H1 (cell line): ENCODE measurements at regions of chr11 and their contacts with region 1.

Region 1: GRCh38 chr11:46295312-46296058 is 18.0 kb downstream of the CREB3L1 start:
- DNase-seq: peak; percentile 64 to 92
- H3K4me3 ChIP-seq: peak overlapping the region; percentile 42 to 67 (median 54)
- H3K27ac ChIP-seq: peak overlapping the region; percentile 79
- H3K4me1 ChIP-seq: peaks cover 22 to 49% (median 35%) of the 10 kb centered on the region in 4 experiments
- H3K27me3 ChIP-seq: no peaks in the 10 kb centered on the region
- CTCF ChIP-seq: no peak
- EP300 ChIP-seq: no peak
- POLR2A ChIP-seq: peak; percentile 71 to 89
- RAD21 ChIP-seq: no peak; a peak in 1 of 4 replicates

Region 2: GRCh38 chr11:46039990-46040389 is 255.5 kb before region 1 on chr11:
- CTCF ChIA-PET with region 1: no interaction called
- POLR2A ChIA-PET with region 1: no interaction called
- DNase-seq: no peak
- H3K4me3 ChIP-seq: no peak overlapping the region
- H3K27ac ChIP-seq: no peak overlapping the region
- H3K4me1 ChIP-seq: no peaks in the 10 kb centered on the region
- H3K27me3 ChIP-seq: no peaks in the 10 kb centered on the region
- CTCF ChIP-seq: no peak
- EP300 ChIP-seq: no peak
- POLR2A ChIP-seq: no peak
- RAD21 ChIP-seq: no peak

Region 3: DNA sequence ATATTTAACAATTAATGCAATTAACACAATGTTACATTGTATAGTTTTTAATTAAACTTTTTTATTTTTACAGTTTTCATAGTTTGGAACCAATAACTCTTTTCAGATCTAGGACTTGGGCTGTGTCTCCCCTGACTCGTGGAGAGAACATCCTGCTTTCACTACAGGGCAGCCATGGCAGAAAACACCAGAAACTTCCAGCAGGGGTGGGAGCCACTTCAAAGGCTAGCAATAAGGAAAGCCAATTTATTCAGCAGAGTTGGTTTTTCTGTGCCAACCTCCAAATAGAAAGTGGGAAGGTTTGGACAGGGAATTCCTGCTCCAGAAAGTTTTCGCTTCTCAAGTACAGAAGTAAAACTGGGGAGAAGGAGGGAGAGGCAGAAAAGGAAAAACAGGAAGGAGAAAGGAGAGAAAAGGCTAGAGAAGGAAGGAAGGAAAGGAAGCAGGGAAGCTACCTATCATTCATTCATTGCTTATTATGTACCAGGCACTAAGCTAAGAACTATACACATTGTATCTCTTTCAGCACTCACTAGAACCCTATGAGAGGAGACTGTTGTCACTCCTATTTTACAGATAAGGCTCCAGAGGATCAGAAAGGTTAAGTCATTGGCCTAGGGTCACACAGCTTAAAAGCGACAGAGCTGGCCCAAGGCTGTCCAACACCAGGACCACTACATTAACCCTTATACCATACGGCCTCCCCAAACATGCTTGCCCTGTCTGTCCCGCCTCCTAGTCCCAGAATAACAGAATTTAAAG is 72.8 kb before region 1 on chr11:
- CTCF ChIA-PET with region 1: no interaction called
- POLR2A ChIA-PET with region 1: no interaction called
- DNase-seq: no peak
- H3K4me3 ChIP-seq: no peak overlapping the region
- H3K27ac ChIP-seq: no peak overlapping the region
- H3K4me1 ChIP-seq: no peaks in the 10 kb centered on the region
- H3K27me3 ChIP-seq: no peaks in the 10 kb centered on the region
- CTCF ChIP-seq: no peak
- EP300 ChIP-seq: no peak
- POLR2A ChIP-seq: no peak
- RAD21 ChIP-seq: no peak

Region 4: DNA sequence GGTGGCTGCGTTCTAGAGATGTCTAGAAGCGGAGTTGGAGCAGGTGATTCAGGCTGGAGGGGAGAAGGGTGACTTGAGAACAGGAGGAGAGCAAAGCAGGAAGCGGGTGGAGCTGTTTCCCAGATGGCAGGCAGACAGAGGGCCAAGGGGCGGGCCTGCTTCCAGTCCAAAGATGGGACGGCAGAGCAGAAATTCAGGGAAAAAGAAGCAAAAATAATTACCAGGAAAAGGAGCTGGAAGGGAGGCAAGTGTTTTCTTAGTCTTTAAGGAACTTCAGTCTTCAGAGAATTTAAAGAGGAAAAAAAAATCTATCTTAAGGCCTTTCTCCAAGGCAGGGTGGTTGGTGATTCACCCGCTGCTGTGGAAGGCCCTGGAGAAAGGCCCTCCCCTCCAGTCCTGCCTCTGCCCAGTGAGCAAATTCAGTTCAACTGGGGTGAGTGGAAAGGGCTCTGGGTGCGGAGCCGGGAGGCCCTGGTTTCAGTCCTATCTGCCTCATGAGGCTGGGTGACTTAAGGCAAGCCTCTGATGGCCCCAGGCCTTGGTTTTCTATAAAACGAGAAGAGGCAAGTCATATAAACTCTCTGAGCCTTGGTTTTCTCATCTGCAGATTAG is 22.6 kb before region 1 on chr11:
- CTCF ChIA-PET with region 1: interaction called, 105 read pairs
- POLR2A ChIA-PET with region 1: interaction called, 51 read pairs
- DNase-seq: no peak
- H3K4me3 ChIP-seq: no peak overlapping the region
- H3K27ac ChIP-seq: no peak overlapping the region
- H3K4me1 ChIP-seq: peaks cover 2 to 14% (median 6%) of the 10 kb centered on the region in 4 experiments; a peak in 4 of 7 replicates
- H3K27me3 ChIP-seq: peaks cover 0 to 4% (median 4%) of the 10 kb centered on the region in 4 experiments; a peak in 2 of 7 replicates
- CTCF ChIP-seq: no peak
- EP300 ChIP-seq: no peak
- POLR2A ChIP-seq: no peak
- RAD21 ChIP-seq: no peak

Region 5: DNA sequence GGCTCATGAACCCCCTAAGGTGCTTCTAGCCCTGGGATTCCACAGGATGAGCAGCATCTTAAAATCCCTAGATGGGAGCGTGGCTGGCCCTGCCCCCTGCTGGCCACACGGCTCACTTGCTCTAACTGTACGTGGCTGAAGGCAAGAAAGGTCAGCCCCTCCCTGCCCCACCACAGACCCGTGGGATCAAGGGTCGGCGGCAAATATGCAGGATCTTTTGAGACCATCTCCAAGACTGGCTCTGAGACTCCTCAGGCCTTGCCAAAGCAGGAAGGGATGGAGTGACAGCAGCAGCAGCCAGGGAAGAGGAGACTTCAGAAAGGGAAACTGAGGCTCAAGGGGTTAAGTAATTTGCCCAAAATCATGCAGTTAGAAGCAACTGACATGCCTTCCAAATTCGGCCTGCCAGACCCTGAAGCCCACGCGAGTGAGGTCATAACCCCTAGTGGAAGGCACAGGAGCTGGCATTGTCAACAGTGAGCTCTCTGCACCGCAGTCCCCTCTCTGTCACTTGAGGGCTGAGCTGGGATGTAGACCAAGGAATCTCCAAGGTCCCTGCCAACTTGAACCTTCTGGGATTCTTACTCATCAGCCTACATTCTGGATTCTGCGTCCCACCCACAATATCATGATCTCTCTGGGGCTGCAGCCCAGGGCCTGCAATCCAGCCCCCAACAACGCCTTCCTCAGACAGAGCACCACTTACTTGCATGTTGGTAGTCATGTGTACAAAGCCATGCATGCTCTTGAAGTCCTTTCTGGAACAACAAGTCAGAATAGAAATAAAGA is 13.3 kb after region 1 on chr11:
- CTCF ChIA-PET with region 1: interaction called, 253 read pairs
- POLR2A ChIA-PET with region 1: interaction called, 55 read pairs
- DNase-seq: peak; percentile 60 to 89
- H3K4me3 ChIP-seq: no peak overlapping the region
- H3K27ac ChIP-seq: no peak overlapping the region
- H3K4me1 ChIP-seq: peaks cover 0 to 12% (median 7%) of the 10 kb centered on the region in 4 experiments; a peak in 6 of 7 replicates
- H3K27me3 ChIP-seq: no peaks in the 10 kb centered on the region
- CTCF ChIP-seq: peak; percentile 89 to 98 (median 94)
- EP300 ChIP-seq: no peak
- POLR2A ChIP-seq: no peak
- RAD21 ChIP-seq: peak; percentile 88 to 93

Region 6: GRCh38 chr11:46332568-46333393 is 37.3 kb after region 1 on chr11:
- CTCF ChIA-PET with region 1: interaction called, 7 read pairs
- POLR2A ChIA-PET with region 1: interaction called, 15 read pairs
- DNase-seq: peak in 1 of 2 experiments; percentile 72
- H3K4me3 ChIP-seq: peak overlapping the region; percentile 44 to 62 (median 55)
- H3K27ac ChIP-seq: no peak overlapping the region
- H3K4me1 ChIP-seq: peaks cover 5 to 46% (median 31%) of the 10 kb centered on the region in 4 experiments
- H3K27me3 ChIP-seq: peaks cover 14 to 44% (median 39%) of the 10 kb centered on the region in 4 experiments
- CTCF ChIP-seq: 0 out of 4 replicates have a peak, but pooled peaks of 1 of the 3 experiments have one; percentile 4
- EP300 ChIP-seq: no peak
- POLR2A ChIP-seq: no peak
- RAD21 ChIP-seq: no peak

Region 7: DNA sequence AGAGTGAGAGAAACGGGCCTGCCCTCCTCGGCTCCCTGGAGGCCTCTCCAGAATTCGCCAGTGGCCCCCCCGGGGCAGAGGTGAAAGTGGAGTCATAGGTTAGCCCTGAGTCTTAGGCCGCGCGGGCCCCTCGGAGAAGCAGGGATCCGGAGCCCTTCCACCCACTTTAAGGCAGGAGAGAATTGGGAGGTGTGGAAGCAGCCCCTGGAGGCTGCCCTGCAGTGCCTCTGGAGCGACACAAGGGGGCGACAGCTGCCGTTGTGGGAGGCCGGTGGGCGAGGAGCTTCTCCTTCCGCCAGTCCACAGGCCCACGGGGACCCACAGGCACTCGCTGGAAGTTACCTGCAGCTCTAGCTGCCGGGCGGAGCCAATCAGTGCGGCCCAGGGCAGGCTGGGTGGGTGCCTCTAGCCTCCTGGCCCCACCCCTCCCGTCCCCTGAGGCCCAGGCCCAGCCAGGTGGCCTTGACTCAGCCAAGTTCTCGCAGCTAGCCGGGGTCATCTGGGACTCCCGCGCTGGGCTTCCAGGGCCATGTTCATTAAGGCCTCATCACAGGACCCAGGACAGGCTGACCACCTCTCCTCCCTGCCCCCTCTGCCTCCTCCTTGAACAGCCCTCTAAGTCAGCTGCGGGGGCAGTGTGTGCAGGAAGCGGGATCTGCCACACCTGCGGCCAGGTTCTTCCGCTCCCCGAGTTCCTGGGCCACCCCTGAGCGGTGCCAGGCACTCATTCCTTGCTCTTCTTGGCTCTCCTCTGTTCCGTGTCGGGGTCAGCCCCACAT is 56.8 kb after region 1 on chr11:
- CTCF ChIA-PET with region 1: interaction called, 23 read pairs
- POLR2A ChIA-PET with region 1: interaction called, 9 read pairs
- DNase-seq: peak in 1 of 2 experiments; percentile 92
- H3K4me3 ChIP-seq: no peak overlapping the region
- H3K27ac ChIP-seq: peak overlapping the region; percentile 29; the same call in 1 of the 2 replicates
- H3K4me1 ChIP-seq: peaks cover 7 to 38% (median 29%) of the 10 kb centered on the region in 4 experiments
- H3K27me3 ChIP-seq: no peaks in the 10 kb centered on the region
- CTCF ChIP-seq: peak; percentile 93 to 98 (median 96)
- EP300 ChIP-seq: no peak; a peak in 1 of 3 replicates
- POLR2A ChIP-seq: no peak
- RAD21 ChIP-seq: peak; percentile 69 to 77

Region 8: DNA sequence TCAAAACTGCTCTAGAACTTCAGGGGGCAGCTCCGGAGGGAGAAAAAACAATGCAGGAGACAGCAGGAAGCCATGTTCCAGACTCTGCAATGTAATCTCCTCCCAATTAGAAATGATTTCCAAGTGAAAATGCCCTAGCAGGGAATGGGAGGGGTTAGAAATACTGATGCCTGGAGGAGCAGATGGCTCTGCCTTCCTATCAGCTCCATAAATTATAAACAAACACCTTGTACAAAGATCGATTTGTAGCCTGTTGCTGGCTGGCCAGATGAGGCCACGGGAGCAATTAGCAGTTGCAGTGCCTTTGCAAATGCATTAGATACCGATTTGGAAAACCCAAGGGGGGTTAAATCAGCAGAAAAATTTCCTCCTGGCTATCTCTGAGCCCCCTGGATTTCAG is 142.7 kb after region 1 on chr11:
- CTCF ChIA-PET with region 1: no interaction called
- POLR2A ChIA-PET with region 1: no interaction called
- DNase-seq: no peak
- H3K4me3 ChIP-seq: no peak overlapping the region
- H3K27ac ChIP-seq: no peak overlapping the region
- H3K4me1 ChIP-seq: peaks cover 7 to 15% (median 11%) of the 10 kb centered on the region in 4 experiments
- H3K27me3 ChIP-seq: no peaks in the 10 kb centered on the region
- CTCF ChIP-seq: no peak
- EP300 ChIP-seq: no peak
- POLR2A ChIP-seq: no peak
- RAD21 ChIP-seq: no peak